Caco-2 (cell line): ENCODE measurements at regions of chr6 and their contacts with region 1.

Region 1: GRCh38 chr6:74574794-74575193 is 631.1 kb downstream of the COL12A1 start:
- DNase-seq: peak in 1 of 2 experiments; percentile 31
- H3K4me3 ChIP-seq: no peak overlapping the region
- H3K4me3 Mint-ChIP-seq: no peak overlapping the region
- H3K27ac Mint-ChIP-seq: no peak overlapping the region
- H3K4me1 ChIP-seq: no peaks in the 10 kb centered on the region
- H3K4me1 Mint-ChIP-seq: no peaks in the 10 kb centered on the region
- H3K27me3 ChIP-seq: no peaks in the 10 kb centered on the region
- H3K27me3 Mint-ChIP-seq: no peaks in the 10 kb centered on the region
- CTCF ChIP-seq: peak; percentile 62 to 70

Region 2: DNA sequence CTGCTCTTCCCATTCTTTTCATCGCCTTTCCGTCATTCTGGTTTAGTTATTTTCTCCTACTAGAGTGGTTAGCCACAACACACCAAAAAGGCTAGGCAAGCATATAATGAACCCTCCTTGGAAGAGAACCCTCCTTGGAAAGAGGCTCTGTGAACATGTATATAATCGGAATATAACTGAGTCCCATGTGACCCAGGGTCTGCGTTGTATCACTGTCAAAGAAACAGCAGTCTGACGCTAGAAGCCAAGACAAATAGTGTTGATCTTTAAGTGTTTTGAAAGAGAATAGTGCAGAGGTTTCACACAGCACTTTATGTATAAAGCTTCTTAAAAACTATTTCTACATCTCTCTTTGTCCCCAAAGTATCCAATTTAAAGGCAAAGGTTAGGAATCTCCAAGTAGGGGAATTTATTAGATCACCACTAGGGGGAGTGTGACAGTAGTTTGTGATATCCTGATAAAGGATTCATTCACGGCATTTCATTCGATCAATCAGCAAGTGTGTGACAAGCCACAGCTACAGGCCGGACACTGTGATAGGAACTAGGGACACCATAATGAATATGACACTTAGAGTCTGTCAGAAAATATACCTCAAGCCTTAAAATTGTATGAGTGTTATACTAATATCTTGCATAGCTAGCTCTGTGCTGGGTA is 483.5 kb before region 1 on chr6:
- CTCF ChIA-PET with region 1: no interaction called
- POLR2A ChIA-PET with region 1: no interaction called
- intact Hi-C with region 1: loop called (anchors 10 kb)
- DNase-seq: peak in 1 of 2 experiments; percentile 41
- H3K4me3 ChIP-seq: no peak overlapping the region
- H3K4me3 Mint-ChIP-seq: no peak overlapping the region
- H3K27ac Mint-ChIP-seq: no peak overlapping the region
- H3K4me1 ChIP-seq: peaks cover 5% of the 10 kb centered on the region; the same call in 1 of the 2 replicates
- H3K4me1 Mint-ChIP-seq: no peaks in the 10 kb centered on the region
- H3K27me3 ChIP-seq: no peaks in the 10 kb centered on the region
- H3K27me3 Mint-ChIP-seq: peaks cover 2% of the 10 kb centered on the region
- CTCF ChIP-seq: peak; percentile 55 to 76

Region 3: DNA sequence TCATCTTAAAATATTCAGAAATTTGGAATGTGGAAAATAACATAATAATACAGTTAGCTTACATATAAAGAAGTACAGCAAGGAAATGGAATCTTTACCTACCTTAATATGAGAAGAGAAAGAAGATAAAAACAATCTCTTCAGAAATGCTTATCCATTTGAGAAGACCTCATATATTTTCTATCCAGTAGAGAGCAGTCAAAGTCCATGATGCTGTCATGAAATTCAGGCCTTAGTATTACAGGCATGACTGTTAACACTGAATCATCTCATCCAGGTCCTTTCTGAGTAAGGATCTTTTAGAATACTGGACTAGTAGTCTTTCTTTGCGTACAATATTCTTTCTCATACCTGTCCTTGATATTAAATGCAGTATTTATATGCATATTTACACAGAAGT is 165.3 kb before region 1 on chr6:
- CTCF ChIA-PET with region 1: no interaction called
- POLR2A ChIA-PET with region 1: no interaction called
- intact Hi-C with region 1: loop called (anchors 1 kb)
- DNase-seq: peak in 1 of 2 experiments; percentile 24
- H3K4me3 ChIP-seq: no peak overlapping the region
- H3K4me3 Mint-ChIP-seq: no peak overlapping the region
- H3K27ac Mint-ChIP-seq: no peak overlapping the region
- H3K4me1 ChIP-seq: peaks cover 16% of the 10 kb centered on the region
- H3K4me1 Mint-ChIP-seq: peaks cover 9% of the 10 kb centered on the region
- H3K27me3 ChIP-seq: no peaks in the 10 kb centered on the region
- H3K27me3 Mint-ChIP-seq: no peaks in the 10 kb centered on the region
- CTCF ChIP-seq: peak; percentile 42 to 46

Region 4: GRCh38 chr6:74451953-74452352 is 122.8 kb before region 1 on chr6:
- CTCF ChIA-PET with region 1: no interaction called
- POLR2A ChIA-PET with region 1: no interaction called
- intact Hi-C with region 1: loop called (anchors 5 kb)
- DNase-seq: no peak
- H3K4me3 ChIP-seq: no peak overlapping the region
- H3K4me3 Mint-ChIP-seq: no peak overlapping the region
- H3K27ac Mint-ChIP-seq: no peak overlapping the region
- H3K4me1 ChIP-seq: 0 out of 2 replicates have a peak, but pooled peaks cover 3% of the 10 kb centered on the region
- H3K4me1 Mint-ChIP-seq: peaks cover 7% of the 10 kb centered on the region
- H3K27me3 ChIP-seq: no peaks in the 10 kb centered on the region
- H3K27me3 Mint-ChIP-seq: no peaks in the 10 kb centered on the region
- CTCF ChIP-seq: no peak